ENCODE measurements at regions of chr10 and their contacts with region 1.

Region 1: GRCh38 chr10:131885391-131886161 is 15.2 kb upstream of the PPP2R2D start:
- DNase-seq: peak; percentile 82
- ATAC-seq: peak; percentile 97
- H3K4me3 Mint-ChIP-seq: no peak overlapping the region
- H3K27ac Mint-ChIP-seq: no peak overlapping the region
- H3K4me1 Mint-ChIP-seq: peaks cover 4% of the 10 kb centered on the region
- H3K27me3 Mint-ChIP-seq: no peaks in the 10 kb centered on the region
- CTCF ChIP-seq: peak; percentile 87

Region 2: GRCh38 chr10:131900350-131901146 is 15.0 kb after region 1 on chr10 and contains the start of gene PPP2R2D:
- CTCF ChIA-PET with region 1: interaction called, 27 read pairs
- POLR2A ChIA-PET with region 1: no interaction called
- intact Hi-C with region 1: no loop called
- DNase-seq: peak; percentile 95
- ATAC-seq: peak; percentile 84
- H3K4me3 Mint-ChIP-seq: peak within 1 kb of the TSS; percentile 92
- H3K27ac Mint-ChIP-seq: peak within 1 kb of the TSS; percentile 90
- H3K4me1 Mint-ChIP-seq: peaks cover 58% of the 10 kb centered on the region
- H3K27me3 Mint-ChIP-seq: peaks cover 6% of the 10 kb centered on the region
- CTCF ChIP-seq: no peak
- total RNA-seq, gene PPP2R2D: 31.6 to 32.3 TPM

Region 3: GRCh38 chr10:131933016-131933695 is 47.6 kb after region 1 on chr10:
- CTCF ChIA-PET with region 1: interaction called, 10 read pairs
- POLR2A ChIA-PET with region 1: no interaction called
- intact Hi-C with region 1: no loop called
- DNase-seq: no peak
- ATAC-seq: no peak
- H3K4me3 Mint-ChIP-seq: no peak overlapping the region
- H3K27ac Mint-ChIP-seq: no peak overlapping the region
- H3K4me1 Mint-ChIP-seq: peaks cover 63% of the 10 kb centered on the region
- H3K27me3 Mint-ChIP-seq: no peaks in the 10 kb centered on the region
- CTCF ChIP-seq: no peak

Region 4: DNA sequence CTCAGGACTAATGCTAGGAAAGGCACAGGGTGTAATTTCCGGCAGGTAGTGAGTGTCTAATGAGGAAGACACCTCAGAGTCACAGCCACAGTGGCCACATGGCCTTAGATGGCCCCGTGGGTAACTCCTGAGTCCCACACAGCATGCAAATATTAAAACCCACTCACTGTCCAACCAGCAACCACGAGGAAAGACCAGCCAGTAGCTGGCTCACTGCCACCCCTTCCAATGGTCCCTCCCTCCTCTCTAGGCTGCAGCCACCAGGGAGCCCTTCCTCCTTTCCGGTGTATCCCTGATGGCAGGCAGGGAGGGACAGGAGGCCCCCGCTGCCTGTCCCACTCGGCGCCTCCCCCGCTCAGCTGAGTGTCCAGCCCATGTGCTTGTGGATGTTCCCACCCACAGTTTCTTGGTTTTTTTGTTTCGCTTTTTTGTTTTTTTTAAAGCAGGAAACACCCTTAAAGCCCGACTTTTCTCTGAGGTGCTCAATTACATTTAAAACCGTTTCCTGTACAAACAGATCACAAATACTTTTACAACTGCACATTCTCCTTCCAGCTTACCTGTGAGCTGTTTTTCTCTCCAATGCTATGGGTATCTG is 87.0 kb after region 1 on chr10:
- CTCF ChIA-PET with region 1: interaction called, 13 read pairs
- POLR2A ChIA-PET with region 1: no interaction called
- intact Hi-C with region 1: no loop called
- DNase-seq: peak; percentile 60
- ATAC-seq: peak; percentile 65
- H3K4me3 Mint-ChIP-seq: peak overlapping the region; percentile 53
- H3K27ac Mint-ChIP-seq: peak overlapping the region; percentile 77
- H3K4me1 Mint-ChIP-seq: peaks cover 76% of the 10 kb centered on the region
- H3K27me3 Mint-ChIP-seq: no peaks in the 10 kb centered on the region
- CTCF ChIP-seq: no peak

Region 5: DNA sequence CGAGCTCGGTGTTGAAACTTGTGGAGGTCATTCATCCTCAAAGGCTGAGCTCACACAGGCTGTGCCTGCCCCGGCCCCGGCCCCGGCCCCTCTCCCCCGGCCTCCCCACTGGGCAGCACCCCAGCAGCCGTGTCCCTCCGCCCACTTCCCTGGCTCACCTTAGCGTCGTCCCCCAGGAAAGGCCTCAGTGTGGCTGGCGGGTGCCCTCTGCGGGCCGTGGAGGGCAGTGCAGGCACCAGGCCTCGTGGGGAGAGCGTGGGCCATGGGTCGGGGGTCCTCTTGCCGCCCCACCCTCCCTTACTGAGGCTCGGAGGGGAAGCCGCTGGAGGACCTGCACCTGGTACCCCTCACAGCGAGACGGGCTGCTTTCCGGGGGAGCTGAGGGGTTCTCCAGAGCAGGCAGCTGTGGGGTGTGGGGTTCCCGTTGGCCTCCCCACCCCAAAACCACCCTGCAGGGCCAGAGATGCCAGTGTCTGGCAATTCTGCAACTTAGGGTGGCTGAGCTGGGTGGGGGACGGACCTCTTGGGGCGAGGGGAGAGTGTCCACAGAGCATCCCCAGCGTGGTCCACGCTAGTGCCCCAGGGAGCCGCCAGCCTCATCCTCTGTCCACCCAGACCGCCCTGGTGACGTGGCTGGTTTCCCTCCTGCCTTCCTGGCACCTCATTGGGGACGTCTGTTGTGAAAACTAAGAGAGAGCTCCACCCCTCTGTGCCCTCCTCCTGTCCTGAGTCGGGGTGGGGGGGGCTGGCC is 257.0 kb after region 1 on chr10:
- CTCF ChIA-PET with region 1: interaction called, 7 read pairs
- POLR2A ChIA-PET with region 1: no interaction called
- intact Hi-C with region 1: loop called (anchors 5 kb)
- DNase-seq: peak; percentile 67
- ATAC-seq: peak; percentile 88
- H3K4me3 Mint-ChIP-seq: no peak overlapping the region
- H3K27ac Mint-ChIP-seq: no peak overlapping the region
- H3K4me1 Mint-ChIP-seq: peaks cover 2% of the 10 kb centered on the region
- H3K27me3 Mint-ChIP-seq: peaks cover 3% of the 10 kb centered on the region
- CTCF ChIP-seq: peak; percentile 92